ENCODE measurements at regions of chr13 and their contacts with region 1.

Region 1: DNA sequence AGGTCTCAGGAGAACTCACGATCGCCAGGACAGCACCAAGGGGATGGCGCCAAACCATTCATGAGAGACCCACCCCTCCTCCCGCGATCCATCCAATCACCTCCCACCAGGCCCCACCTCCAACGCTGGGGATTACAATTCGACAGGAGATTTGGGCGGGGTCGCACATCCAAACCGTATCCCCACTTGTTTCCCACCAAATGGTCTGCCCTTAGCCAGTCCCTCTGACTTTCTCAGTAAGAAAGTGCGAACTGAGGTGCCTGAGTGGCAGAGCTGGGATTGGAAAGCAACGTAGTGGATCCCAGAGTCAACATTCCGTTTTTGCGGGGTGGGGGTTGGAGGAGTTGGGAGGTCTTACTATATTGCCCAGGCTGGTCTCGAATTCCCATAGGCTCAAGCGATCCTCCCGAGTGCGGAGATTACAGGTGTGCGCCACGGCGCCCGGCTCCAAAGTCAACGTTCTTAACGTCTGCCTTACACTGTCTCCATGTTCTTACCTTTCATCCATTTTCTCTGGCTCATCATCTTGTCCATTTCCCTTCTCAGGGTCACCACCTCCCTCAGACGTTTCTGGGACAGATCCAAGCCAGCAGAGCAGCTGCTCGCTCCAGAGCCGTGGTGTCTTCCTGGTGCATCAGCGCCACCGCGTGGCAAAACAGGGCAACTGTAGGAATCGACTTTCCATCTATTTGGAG is 102.7 kb upstream of the ABCC4 start:
- DNase-seq: peak; percentile 71 to 81 (median 78)
- ATAC-seq: peak; percentile 96
- H3K4me3 ChIP-seq: no peak overlapping the region
- H3K27ac ChIP-seq: no peak overlapping the region
- H3K4me1 ChIP-seq: peaks cover 0 to 4% of the 10 kb centered on the region in 2 experiments; a peak in 1 of 5 replicates
- H3K27me3 ChIP-seq: no peaks in the 10 kb centered on the region; a peak in 1 of 5 replicates
- CTCF ChIP-seq: peak; percentile 82 to 91 (median 84)
- EP300 ChIP-seq: no peak
- POLR2A ChIP-seq: no peak
- RAD21 ChIP-seq: peak; percentile 95 to 96

Region 2: GRCh38 chr13:94435604-94436226 is 968.3 kb before region 1 on chr13:
- CTCF ChIA-PET with region 1: no interaction called
- POLR2A ChIA-PET with region 1: no interaction called
- in situ Hi-C with region 1: no loop called
- intact Hi-C with region 1: loop called (anchors 10 kb)
- DNase-seq: peak; percentile 25 to 40 (median 34)
- ATAC-seq: peak; percentile 65
- H3K4me3 ChIP-seq: no peak overlapping the region
- H3K27ac ChIP-seq: no peak overlapping the region
- H3K4me1 ChIP-seq: peaks cover 0 to 6% of the 10 kb centered on the region in 2 experiments; a peak in 4 of 5 replicates
- H3K27me3 ChIP-seq: no peaks in the 10 kb centered on the region; a peak in 1 of 5 replicates
- CTCF ChIP-seq: peak; percentile 23 to 60 (median 41); a peak in 4 of 6 replicates
- EP300 ChIP-seq: no peak
- POLR2A ChIP-seq: no peak
- RAD21 ChIP-seq: peak; percentile 67 to 75

Region 3: DNA sequence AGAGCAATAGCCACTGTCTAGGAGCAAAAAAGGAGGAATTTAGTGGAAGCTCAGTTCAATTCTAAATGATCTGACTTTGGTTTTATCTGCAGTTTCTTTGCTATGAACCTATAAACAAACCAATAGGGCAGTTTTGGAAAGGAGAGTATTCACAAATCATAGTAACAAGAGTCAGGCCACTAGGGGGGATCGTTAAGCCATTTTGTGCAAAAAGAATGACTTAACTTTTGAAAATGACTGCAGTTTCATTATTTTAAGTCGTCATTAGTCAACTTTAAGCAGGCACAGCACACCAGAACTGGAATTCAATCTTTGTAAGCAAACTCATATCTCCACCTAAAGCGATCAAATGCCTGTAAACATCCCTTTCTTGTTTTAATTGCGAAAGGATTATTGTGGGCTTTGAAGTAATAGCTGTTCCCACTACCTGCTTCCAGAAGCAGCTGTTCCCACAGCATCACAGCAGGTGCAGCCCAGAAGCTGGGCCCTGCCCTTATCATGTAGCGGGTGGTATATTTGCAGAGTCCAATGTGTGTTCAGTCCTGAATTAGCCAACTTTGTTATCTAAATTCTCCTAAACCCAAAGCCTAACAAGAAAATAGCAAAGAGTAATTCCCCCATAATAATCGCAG is 743.2 kb before region 1 on chr13:
- CTCF ChIA-PET with region 1: no interaction called
- POLR2A ChIA-PET with region 1: no interaction called
- in situ Hi-C with region 1: loop called (anchors 25 kb)
- intact Hi-C with region 1: loop called (anchors 10 kb)
- DNase-seq: peak in 3 of 4 experiments; percentile 28 to 63 (median 34)
- ATAC-seq: peak; percentile 35
- H3K4me3 ChIP-seq: no peak overlapping the region
- H3K27ac ChIP-seq: peak overlapping the region; percentile 11; the same call in 1 of the 3 replicates
- H3K4me1 ChIP-seq: peaks cover 10 to 67% of the 10 kb centered on the region in 2 experiments
- H3K27me3 ChIP-seq: no peaks in the 10 kb centered on the region
- CTCF ChIP-seq: peak; percentile 33 to 57 (median 42); a peak in 4 of 6 replicates
- EP300 ChIP-seq: no peak
- POLR2A ChIP-seq: no peak
- RAD21 ChIP-seq: peak; percentile 34 to 71; a peak in 3 of 4 replicates

Region 4: DNA sequence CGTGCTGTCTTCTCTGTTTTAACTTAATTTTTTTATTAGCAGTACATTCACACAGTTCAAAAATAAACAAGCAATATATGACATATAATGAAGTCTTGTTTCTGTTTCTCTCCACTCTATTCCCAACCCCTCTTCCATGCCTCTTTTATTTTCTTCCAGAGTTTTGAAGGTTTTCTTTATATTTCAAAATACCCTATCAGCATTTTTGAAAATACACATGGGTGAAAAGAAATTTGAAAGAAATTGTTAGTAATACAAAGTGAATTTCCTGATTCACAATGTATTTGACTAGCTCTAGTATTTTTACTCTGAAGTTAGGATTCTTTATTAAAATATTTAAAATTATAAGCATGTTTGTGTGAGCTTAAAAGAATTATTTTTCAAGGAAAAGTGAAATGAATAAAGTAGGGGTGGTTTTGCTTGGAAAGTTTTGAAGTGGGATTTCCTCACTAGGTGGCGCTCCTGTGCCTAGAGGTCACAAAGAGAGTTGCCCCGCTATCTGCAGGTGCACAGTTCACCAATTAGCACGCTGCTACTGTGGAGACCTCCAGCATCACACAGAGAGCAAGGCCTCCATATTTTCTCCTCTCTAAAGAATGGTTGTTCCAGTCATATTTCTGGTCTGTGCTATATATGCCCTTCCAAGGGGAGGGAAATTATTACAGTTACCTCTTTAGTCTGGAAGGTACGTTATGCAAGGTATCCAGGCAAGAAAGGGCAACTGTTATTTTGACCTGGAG is 729.2 kb before region 1 on chr13:
- CTCF ChIA-PET with region 1: no interaction called
- POLR2A ChIA-PET with region 1: no interaction called
- in situ Hi-C with region 1: loop called (anchors 25 kb)
- intact Hi-C with region 1: loop called (anchors 10 kb)
- DNase-seq: peak; percentile 61 to 78 (median 64)
- ATAC-seq: peak; percentile 91
- H3K4me3 ChIP-seq: no peak overlapping the region
- H3K27ac ChIP-seq: no peak overlapping the region
- H3K4me1 ChIP-seq: peaks cover 5 to 6% of the 10 kb centered on the region in 2 experiments; a peak in 3 of 5 replicates
- H3K27me3 ChIP-seq: no peaks in the 10 kb centered on the region
- CTCF ChIP-seq: peak; percentile 66 to 75 (median 67)
- EP300 ChIP-seq: no peak
- POLR2A ChIP-seq: no peak
- RAD21 ChIP-seq: peak; percentile 48 to 62

Region 5: DNA sequence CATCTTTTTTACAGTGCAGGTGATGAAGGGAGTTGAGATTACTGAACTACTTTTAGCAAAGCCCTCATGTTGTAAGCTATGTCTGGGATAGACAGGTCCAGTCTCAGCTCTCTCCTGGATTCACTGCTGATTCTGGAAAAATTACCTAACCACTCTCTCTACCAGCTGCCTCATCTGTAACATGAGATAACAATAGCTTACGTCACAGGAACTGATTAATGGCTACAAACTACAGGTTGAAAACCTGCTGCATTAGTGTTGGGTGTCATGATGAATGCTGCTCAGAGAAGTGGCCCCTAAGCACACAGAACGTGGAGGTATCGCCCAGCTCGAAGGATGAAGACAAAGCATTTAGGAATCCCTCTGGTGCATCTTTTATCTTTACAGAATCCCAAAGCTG is 380.6 kb before region 1 on chr13:
- CTCF ChIA-PET with region 1: no interaction called
- POLR2A ChIA-PET with region 1: no interaction called
- in situ Hi-C with region 1: no loop called
- intact Hi-C with region 1: loop called (anchors 10 kb)
- DNase-seq: no peak
- ATAC-seq: 0 out of 3 replicates have a peak, but pooled peaks have one; percentile 22
- H3K4me3 ChIP-seq: no peak overlapping the region
- H3K27ac ChIP-seq: no peak overlapping the region
- H3K4me1 ChIP-seq: no peaks in the 10 kb centered on the region
- H3K27me3 ChIP-seq: no peaks in the 10 kb centered on the region
- CTCF ChIP-seq: no peak
- EP300 ChIP-seq: no peak
- POLR2A ChIP-seq: no peak
- RAD21 ChIP-seq: no peak

Region 6: DNA sequence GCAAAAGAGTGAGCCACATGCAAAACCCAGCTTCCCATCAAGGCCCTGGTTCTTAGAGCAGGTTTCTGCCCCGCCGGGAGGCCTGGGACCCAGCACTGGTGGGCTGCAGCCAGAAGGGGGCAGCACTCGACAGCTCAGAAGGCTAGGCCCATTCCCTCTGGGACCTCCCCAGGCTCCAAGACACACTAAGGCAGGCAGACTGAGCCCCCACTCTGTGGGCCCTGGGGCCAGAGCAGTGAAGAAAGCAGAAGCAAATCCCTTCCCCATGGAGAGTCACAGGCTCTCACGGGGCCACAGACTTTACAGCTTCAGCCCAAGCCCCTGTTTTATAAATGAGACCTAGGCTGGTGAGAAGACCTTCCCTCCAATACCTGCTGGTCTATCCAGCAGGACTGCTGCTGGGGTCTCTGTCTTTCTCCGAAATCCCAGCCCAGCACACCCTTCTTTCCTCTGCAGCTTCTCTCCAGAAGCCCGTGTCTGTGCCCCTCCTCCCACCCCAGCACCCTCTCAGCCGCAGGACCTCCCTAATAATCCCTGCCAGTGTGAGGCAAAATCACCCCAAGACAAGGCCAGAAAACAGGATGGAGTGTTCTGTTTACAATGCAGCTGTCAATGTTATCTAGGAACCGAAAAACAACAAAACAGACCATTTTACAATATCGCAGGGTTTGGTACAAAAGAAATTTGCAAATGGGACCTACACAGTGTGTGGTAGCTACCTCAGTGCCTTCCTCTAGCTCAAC is 212.0 kb before region 1 on chr13:
- CTCF ChIA-PET with region 1: interaction called, 57 read pairs
- POLR2A ChIA-PET with region 1: interaction called, 4 read pairs
- in situ Hi-C with region 1: no loop called
- intact Hi-C with region 1: loop called (anchors 1 kb)
- DNase-seq: peak; percentile 62 to 82 (median 66)
- ATAC-seq: peak; percentile 100
- H3K4me3 ChIP-seq: no peak overlapping the region
- H3K27ac ChIP-seq: no peak overlapping the region
- H3K4me1 ChIP-seq: 0 out of 5 replicates have a peak, but pooled peaks cover 0 to 3% of the 10 kb centered on the region in 2 experiments
- H3K27me3 ChIP-seq: no peaks in the 10 kb centered on the region
- CTCF ChIP-seq: peak; percentile 78 to 88 (median 88)
- EP300 ChIP-seq: no peak
- POLR2A ChIP-seq: no peak
- RAD21 ChIP-seq: peak; percentile 84 to 91

Region 7: GRCh38 chr13:95480131-95480545 is 76.2 kb after region 1 on chr13:
- CTCF ChIA-PET with region 1: interaction called, 3 read pairs
- POLR2A ChIA-PET with region 1: no interaction called
- in situ Hi-C with region 1: no loop called
- intact Hi-C with region 1: loop called (anchors 2 kb)
- DNase-seq: no peak
- ATAC-seq: no peak
- H3K4me3 ChIP-seq: no peak overlapping the region
- H3K27ac ChIP-seq: no peak overlapping the region
- H3K4me1 ChIP-seq: peaks cover 0 to 19% of the 10 kb centered on the region in 2 experiments; a peak in 3 of 5 replicates
- H3K27me3 ChIP-seq: peaks cover 0 to 8% of the 10 kb centered on the region in 2 experiments; a peak in 1 of 5 replicates
- CTCF ChIP-seq: no peak
- EP300 ChIP-seq: no peak
- POLR2A ChIP-seq: no peak
- RAD21 ChIP-seq: no peak

Measured in K562 (cell line).